ENCODE measurements at regions of chr6 and their contacts with region 1.

Region 1: GRCh38 chr6:2848851-2849250 is 7.2 kb upstream of the SERPINB1 start:
- DNase-seq: peak; percentile 48 to 92 (median 72)
- ATAC-seq: peak; percentile 96
- H3K4me3 ChIP-seq: no peak overlapping the region
- H3K4me3 Mint-ChIP-seq: peak overlapping the region; percentile 72
- H3K27ac ChIP-seq: peak overlapping the region in 1 of 2 donors; percentile 27
- H3K27ac Mint-ChIP-seq: peak overlapping the region; percentile 90
- H3K4me1 ChIP-seq: peaks cover 41% of the 10 kb centered on the region
- H3K4me1 Mint-ChIP-seq: peaks cover 49% of the 10 kb centered on the region
- H3K27me3 ChIP-seq: no peaks in the 10 kb centered on the region
- H3K27me3 Mint-ChIP-seq: no peaks in the 10 kb centered on the region
- CTCF ChIP-seq: no peak

Region 2: DNA sequence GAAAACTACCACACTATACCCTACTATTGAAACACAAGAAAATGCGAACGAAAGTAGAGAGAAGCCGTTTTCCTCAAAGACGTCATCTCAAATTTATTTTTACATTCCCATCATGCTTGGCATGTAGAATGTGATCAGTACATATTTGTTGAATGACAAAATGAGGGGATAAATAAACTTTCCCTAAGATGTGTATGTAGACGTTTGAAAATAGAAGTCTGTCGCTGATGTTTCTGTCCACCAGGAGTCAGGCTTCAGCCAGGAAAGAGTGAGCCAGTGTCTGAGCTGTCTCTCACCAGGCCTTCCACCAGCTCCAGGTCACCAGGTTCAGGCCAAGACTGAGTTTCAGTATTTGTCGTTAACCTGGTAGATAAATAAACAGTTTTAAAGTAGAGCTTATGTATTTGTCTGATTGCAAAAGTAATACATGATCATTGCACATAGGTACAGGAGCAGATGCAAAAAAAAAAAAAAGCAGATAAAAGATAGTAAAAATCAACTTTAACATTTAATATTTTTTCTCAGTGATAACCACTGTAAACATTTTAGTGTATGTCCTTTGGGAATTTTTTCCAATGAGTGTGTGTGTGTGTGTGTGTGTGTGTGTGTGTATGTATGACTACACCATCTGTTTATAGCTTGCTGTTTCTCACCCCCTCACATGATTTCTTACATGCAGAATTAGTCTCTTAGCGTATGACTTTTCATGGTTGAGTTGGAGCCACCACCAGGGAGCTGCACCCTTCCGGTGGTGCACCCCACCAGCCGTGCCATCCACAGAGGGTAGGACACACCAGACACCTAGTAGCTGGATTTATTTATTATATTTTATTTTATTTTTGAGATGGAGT is 57.5 kb before region 1 on chr6:
- CTCF ChIA-PET with region 1: no interaction called
- POLR2A ChIA-PET with region 1: interaction called, 8 read pairs
- intact Hi-C with region 1: loop called (anchors 1 to 5 kb)
- DNase-seq: peak; percentile 22 to 76 (median 42)
- ATAC-seq: peak; percentile 86
- H3K4me3 ChIP-seq: no peak overlapping the region
- H3K4me3 Mint-ChIP-seq: peak overlapping the region; percentile 49
- H3K27ac ChIP-seq: no peak overlapping the region
- H3K27ac Mint-ChIP-seq: peak overlapping the region; percentile 70
- H3K4me1 ChIP-seq: peaks cover 22% of the 10 kb centered on the region
- H3K4me1 Mint-ChIP-seq: peaks cover 37% of the 10 kb centered on the region
- H3K27me3 ChIP-seq: no peaks in the 10 kb centered on the region
- H3K27me3 Mint-ChIP-seq: no peaks in the 10 kb centered on the region
- CTCF ChIP-seq: peak; percentile 68

Region 3: DNA sequence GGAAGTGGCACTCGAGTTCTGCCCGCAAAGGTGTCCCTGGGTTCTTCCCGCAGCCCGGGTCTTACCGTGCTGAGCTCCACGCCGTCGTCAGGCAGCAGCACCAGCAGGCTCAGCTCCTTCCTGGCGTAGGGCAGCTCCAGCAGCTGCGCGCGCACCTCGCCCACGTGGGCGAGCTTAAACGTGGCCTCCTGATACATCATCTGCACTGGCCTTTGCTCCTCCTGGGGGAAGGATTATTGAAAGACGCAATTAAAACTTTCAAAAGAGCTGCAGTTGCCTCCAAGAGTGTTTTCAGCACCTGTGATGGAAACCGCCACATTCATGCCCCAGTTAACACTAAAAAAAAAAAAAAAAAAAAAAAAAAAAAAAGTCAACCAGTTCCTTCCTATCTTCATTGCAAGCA is 42.9 kb after region 1 on chr6:
- CTCF ChIA-PET with region 1: interaction called, 8 read pairs
- POLR2A ChIA-PET with region 1: interaction called, 12 read pairs
- intact Hi-C with region 1: loop called in 1 of 2 experiments (anchors 5 kb)
- DNase-seq: peak; percentile 44 to 94 (median 72)
- ATAC-seq: peak; percentile 97
- H3K4me3 ChIP-seq: peak overlapping the region; percentile 9
- H3K4me3 Mint-ChIP-seq: peak overlapping the region; percentile 81
- H3K27ac ChIP-seq: peak overlapping the region; percentile 29 to 51
- H3K27ac Mint-ChIP-seq: peak overlapping the region; percentile 96
- H3K4me1 ChIP-seq: peaks cover 21% of the 10 kb centered on the region
- H3K4me1 Mint-ChIP-seq: peaks cover 80% of the 10 kb centered on the region
- H3K27me3 ChIP-seq: no peaks in the 10 kb centered on the region
- H3K27me3 Mint-ChIP-seq: no peaks in the 10 kb centered on the region
- CTCF ChIP-seq: no peak

Region 4: DNA sequence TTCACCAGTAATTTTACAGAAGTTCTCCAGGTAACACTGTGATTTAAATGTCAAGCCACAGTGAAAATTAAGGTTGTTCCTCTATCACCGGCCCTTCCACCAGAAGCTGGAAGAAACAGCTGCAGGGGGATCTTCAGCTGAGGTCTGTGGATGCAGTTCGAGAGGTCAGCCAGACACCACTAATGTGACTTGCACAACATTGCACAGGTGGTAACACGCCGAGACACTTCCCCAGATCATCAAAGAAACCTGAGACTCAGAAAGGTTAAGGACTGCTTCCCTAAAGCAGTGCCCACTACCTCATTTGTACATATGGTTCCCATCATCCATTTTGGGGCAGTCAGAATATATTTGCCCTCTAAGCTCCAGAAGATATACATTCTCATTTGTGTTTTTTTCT is 62.3 kb after region 1 on chr6:
- CTCF ChIA-PET with region 1: interaction called, 54 read pairs
- POLR2A ChIA-PET with region 1: interaction called, 33 read pairs
- intact Hi-C with region 1: loop called (anchors 1 kb)
- DNase-seq: no peak
- ATAC-seq: no peak
- H3K4me3 ChIP-seq: no peak overlapping the region
- H3K4me3 Mint-ChIP-seq: no peak overlapping the region
- H3K27ac ChIP-seq: no peak overlapping the region
- H3K27ac Mint-ChIP-seq: no peak overlapping the region
- H3K4me1 ChIP-seq: peaks cover 15% of the 10 kb centered on the region
- H3K4me1 Mint-ChIP-seq: peaks cover 25% of the 10 kb centered on the region
- H3K27me3 ChIP-seq: no peaks in the 10 kb centered on the region
- H3K27me3 Mint-ChIP-seq: no peaks in the 10 kb centered on the region
- CTCF ChIP-seq: no peak

Region 5: DNA sequence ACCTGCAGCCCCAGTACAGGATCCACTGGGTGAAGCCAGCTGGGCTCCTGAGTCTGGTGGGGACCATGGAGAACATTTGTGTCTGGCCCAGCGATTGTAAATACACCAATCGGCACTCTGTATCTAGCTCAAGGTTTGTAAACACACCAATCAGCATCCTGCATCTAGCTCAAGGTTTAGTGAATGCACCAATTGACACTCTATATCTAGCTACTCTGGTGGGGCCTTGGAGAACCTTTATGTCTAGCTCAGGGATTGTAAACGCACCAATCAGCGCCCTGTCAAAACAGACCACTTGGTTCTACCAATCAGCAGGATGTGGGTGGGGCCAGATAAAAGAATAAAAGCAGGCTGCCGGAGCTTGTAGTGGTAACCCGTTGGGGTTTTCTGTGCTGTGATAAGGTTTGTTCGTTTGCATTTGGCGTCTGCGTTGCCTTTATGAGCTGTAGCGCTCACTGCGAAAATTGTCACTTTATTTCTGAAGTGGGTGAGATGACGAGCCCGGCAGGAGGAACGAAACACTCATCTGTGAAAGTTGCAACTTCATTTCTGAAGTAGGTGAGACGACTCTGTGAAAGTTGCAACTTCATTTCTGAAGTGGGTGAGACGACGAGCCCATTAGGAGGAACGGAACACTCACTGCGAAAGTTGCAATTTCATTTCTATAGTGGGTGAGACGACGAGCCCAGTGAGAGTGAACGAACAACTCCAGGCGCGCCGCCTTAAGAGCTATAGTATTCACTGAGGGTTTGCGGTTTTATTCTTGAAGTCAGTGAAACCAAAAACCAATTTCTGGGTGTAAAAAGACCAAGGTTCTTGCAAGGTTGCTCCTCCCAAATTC is 91.4 kb after region 1 on chr6:
- CTCF ChIA-PET with region 1: interaction called, 3 read pairs
- POLR2A ChIA-PET with region 1: interaction called, 12 read pairs
- intact Hi-C with region 1: no loop called
- DNase-seq: peak; percentile 56 to 92 (median 66)
- ATAC-seq: peak; percentile 73
- H3K4me3 ChIP-seq: peak overlapping the region; percentile 66
- H3K4me3 Mint-ChIP-seq: peak overlapping the region; percentile 85
- H3K27ac ChIP-seq: peak overlapping the region; percentile 55 to 86
- H3K27ac Mint-ChIP-seq: peak overlapping the region; percentile 90
- H3K4me1 ChIP-seq: peaks cover 69% of the 10 kb centered on the region
- H3K4me1 Mint-ChIP-seq: peaks cover 66% of the 10 kb centered on the region
- H3K27me3 ChIP-seq: no peaks in the 10 kb centered on the region
- H3K27me3 Mint-ChIP-seq: no peaks in the 10 kb centered on the region
- CTCF ChIP-seq: no peak